ENCODE measurements at regions of chr17 and their contacts with region 1.

Region 1: GRCh38 chr17:64420143-64420971 is 28.6 kb upstream of the MILR1 start:
- DNase-seq: no peak
- ATAC-seq: peak; percentile 86
- H3K4me3 Mint-ChIP-seq: no peak overlapping the region
- H3K27ac Mint-ChIP-seq: no peak overlapping the region
- H3K4me1 Mint-ChIP-seq: no peaks in the 10 kb centered on the region
- H3K27me3 Mint-ChIP-seq: peaks cover 2% of the 10 kb centered on the region; the same call in 1 of the 2 replicates
- CTCF ChIP-seq: peak; percentile 52

Region 2: DNA sequence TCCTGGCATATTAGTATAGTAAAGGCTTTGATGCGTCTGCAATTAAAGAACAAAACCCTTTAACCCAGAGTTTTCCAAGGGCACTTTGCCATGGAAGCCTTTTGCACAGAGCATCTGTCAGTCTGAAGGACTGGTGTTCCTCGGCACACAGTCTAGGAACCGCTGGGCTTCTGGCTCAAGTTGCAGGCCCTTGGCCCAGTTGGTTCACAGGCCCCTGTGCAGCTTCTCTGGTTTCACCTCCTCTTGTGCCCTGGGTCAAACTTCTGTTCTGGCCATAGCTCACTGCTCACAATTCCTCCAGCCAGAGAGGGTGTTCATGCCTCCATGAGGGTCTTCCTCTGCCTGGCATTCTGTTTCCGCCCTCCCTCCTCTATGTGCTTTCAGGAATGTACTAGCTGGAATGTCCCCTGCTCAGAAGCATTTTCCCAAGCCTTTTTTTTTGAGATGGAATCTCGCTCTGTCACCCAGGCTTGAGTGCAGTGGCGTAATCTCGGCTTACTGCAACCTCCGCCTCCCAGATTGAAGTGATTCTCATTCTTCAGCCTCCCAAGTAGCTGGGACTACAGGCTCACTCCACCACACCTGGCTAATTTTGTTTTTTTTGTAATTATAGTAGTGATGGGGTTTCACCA is 122.8 kb before region 1 on chr17:
- CTCF ChIA-PET with region 1: interaction called, 26 read pairs
- POLR2A ChIA-PET with region 1: no interaction called
- DNase-seq: no peak
- ATAC-seq: no peak
- H3K4me3 Mint-ChIP-seq: no peak overlapping the region
- H3K27ac Mint-ChIP-seq: no peak overlapping the region
- H3K4me1 Mint-ChIP-seq: no peaks in the 10 kb centered on the region
- H3K27me3 Mint-ChIP-seq: no peaks in the 10 kb centered on the region
- CTCF ChIP-seq: no peak

Region 3: DNA sequence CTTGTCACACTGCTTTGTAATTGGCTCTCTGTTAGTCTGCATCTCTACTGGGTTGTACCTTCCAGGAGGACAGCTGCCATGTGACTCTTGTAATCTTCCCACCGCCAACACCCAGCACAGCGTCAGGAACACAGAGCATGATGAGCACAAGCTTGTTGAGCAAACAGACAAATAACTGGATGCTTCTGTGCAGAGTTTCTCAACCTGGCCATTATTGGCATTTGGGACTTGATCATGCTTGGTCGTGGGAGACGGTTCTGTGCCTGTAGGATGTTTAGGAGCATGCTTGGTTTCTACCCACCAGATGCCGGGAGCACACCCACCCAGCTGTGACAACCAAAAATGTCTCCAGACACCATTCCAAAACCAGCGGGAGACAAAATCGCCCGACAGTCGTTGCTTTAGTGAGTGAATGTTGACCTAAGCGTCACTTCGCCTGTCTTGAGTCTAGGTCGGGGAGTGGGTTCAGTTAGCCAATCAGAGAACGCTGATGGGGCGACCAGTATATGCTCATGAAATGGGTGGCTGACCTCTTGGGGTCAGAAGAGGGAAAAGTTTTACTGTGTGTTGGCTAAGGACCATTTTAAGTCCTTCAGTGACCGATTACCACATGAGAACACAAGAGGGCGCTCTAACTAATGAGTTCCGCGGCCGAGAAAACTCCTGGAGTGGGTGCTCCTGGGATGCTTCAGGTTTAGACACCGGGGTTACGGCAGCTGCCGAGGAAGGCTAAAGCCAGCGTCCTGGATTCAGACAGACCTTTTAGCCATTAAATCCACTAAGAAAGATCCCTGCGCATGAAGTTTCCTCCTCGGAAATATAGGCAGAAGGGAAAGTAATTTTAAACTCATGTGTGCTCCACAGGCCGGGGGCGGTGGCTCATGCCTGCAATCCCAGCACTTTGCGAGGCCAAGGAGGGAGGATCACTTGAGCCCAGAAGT is 99.5 kb before region 1 on chr17:
- CTCF ChIA-PET with region 1: interaction called, 51 read pairs
- POLR2A ChIA-PET with region 1: no interaction called
- DNase-seq: peak; percentile 72
- ATAC-seq: peak; percentile 99
- H3K4me3 Mint-ChIP-seq: no peak overlapping the region
- H3K27ac Mint-ChIP-seq: no peak overlapping the region
- H3K4me1 Mint-ChIP-seq: no peaks in the 10 kb centered on the region
- H3K27me3 Mint-ChIP-seq: peaks cover 2% of the 10 kb centered on the region; the same call in 1 of the 2 replicates
- CTCF ChIP-seq: peak; percentile 60

Region 4: GRCh38 chr17:64354824-64355535 is 65.4 kb before region 1 on chr17:
- CTCF ChIA-PET with region 1: interaction called, 10 read pairs
- POLR2A ChIA-PET with region 1: no interaction called
- DNase-seq: no peak
- ATAC-seq: no peak
- H3K4me3 Mint-ChIP-seq: no peak overlapping the region
- H3K27ac Mint-ChIP-seq: no peak overlapping the region
- H3K4me1 Mint-ChIP-seq: no peaks in the 10 kb centered on the region
- H3K27me3 Mint-ChIP-seq: no peaks in the 10 kb centered on the region
- CTCF ChIP-seq: no peak

Region 5: GRCh38 chr17:64369007-64369893 is 51.1 kb before region 1 on chr17:
- CTCF ChIA-PET with region 1: no interaction called
- POLR2A ChIA-PET with region 1: no interaction called
- DNase-seq: no peak
- ATAC-seq: no peak
- H3K4me3 Mint-ChIP-seq: no peak overlapping the region
- H3K27ac Mint-ChIP-seq: no peak overlapping the region
- H3K4me1 Mint-ChIP-seq: no peaks in the 10 kb centered on the region
- H3K27me3 Mint-ChIP-seq: no peaks in the 10 kb centered on the region
- CTCF ChIP-seq: no peak

Region 6: DNA sequence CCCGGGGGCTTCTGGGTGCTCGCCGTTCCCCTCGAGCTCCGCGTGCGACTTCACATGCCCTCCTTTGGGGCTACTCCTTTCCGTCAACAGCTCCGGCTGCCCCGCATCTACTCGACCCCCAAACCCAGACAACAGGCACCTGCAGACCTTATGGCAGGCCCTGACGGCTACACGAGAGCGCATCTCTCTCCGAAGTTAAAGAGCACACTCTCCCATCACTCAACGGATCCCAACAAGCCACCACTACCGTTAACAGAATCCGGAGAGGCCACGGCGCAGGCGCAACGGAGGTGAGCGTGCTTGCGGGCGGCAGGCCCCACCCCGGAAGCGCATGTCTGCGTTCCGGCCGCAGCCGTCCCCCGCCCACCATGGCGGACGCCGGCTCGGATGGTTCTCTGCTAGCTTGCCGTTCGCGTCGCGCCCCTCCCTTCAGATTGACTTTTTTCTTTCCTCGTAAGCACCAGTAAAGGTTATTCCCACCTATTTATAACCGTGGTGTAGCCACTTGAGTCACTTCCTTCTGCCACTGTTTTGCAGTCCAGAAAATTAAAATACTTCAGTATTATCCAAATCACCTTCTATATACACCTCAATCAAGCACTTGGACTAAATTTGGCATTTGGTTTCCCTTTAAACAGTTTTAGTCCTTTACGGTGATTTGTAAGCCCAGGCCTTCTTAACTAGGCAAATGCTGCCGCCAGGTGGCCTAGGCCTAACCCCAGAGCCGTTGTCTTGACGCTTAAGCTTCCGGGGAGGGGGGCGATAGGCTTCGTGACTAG is 76.6 kb after region 1 on chr17 and contains the start of gene POLG2:
- CTCF ChIA-PET with region 1: interaction called, 97 read pairs
- POLR2A ChIA-PET with region 1: no interaction called
- DNase-seq: peak; percentile 93
- ATAC-seq: peak; percentile 85
- H3K4me3 Mint-ChIP-seq: peak within 1 kb of the TSS; percentile 100
- H3K27ac Mint-ChIP-seq: peak within 1 kb of the TSS; percentile 98
- H3K4me1 Mint-ChIP-seq: peaks cover 54% of the 10 kb centered on the region
- H3K27me3 Mint-ChIP-seq: no peaks in the 10 kb centered on the region
- CTCF ChIP-seq: no peak
- total RNA-seq, gene POLG2: 38.5 to 44.3 TPM (median 42.7 TPM) in 3 replicates

Region 7: GRCh38 chr17:64534175-64534574 is 113.8 kb after region 1 on chr17:
- CTCF ChIA-PET with region 1: no interaction called
- POLR2A ChIA-PET with region 1: no interaction called
- DNase-seq: no peak
- ATAC-seq: no peak
- H3K4me3 Mint-ChIP-seq: no peak overlapping the region
- H3K27ac Mint-ChIP-seq: no peak overlapping the region
- H3K4me1 Mint-ChIP-seq: no peaks in the 10 kb centered on the region
- H3K27me3 Mint-ChIP-seq: no peaks in the 10 kb centered on the region
- CTCF ChIP-seq: no peak

Measured in WTC11 (cell line).